B cell (primary cell): ENCODE measurements at regions of chr3 and their contacts with region 1.

Region 1: GRCh38 chr3:4517643-4518311 is 24.6 kb downstream of the ITPR1 start:
- DNase-seq: no peak
- ATAC-seq: peak; percentile 36
- H3K4me3 ChIP-seq: no peak overlapping the region
- H3K4me3 Mint-ChIP-seq: peak overlapping the region; percentile 32
- H3K27ac ChIP-seq: peak overlapping the region in 1 of 2 donors; percentile 70
- H3K27ac Mint-ChIP-seq: peak overlapping the region; percentile 73
- H3K4me1 ChIP-seq: peaks cover 55 to 58% of the 10 kb centered on the region in 2 donors
- H3K4me1 Mint-ChIP-seq: peaks cover 72% of the 10 kb centered on the region
- H3K27me3 ChIP-seq: no peaks in the 10 kb centered on the region
- H3K27me3 Mint-ChIP-seq: no peaks in the 10 kb centered on the region
- CTCF ChIP-seq: no peak

Region 2: GRCh38 chr3:4504340-4505261 is 13.2 kb before region 1 on chr3:
- CTCF ChIA-PET with region 1: interaction called, 14 read pairs
- POLR2A ChIA-PET with region 1: interaction called, 6 read pairs
- intact Hi-C with region 1: loop called (anchors 1 kb)
- DNase-seq: peak; percentile 63
- ATAC-seq: no peak
- H3K4me3 ChIP-seq: peak overlapping the region; percentile 24 to 59 (median 44)
- H3K4me3 Mint-ChIP-seq: peak overlapping the region; percentile 85
- H3K27ac ChIP-seq: peak overlapping the region; percentile 81 to 98
- H3K27ac Mint-ChIP-seq: peak overlapping the region; percentile 93
- H3K4me1 ChIP-seq: peaks cover 80 to 87% of the 10 kb centered on the region in 2 donors
- H3K4me1 Mint-ChIP-seq: peaks cover 88% of the 10 kb centered on the region
- H3K27me3 ChIP-seq: no peaks in the 10 kb centered on the region
- H3K27me3 Mint-ChIP-seq: no peaks in the 10 kb centered on the region
- CTCF ChIP-seq: no peak

Region 3: DNA sequence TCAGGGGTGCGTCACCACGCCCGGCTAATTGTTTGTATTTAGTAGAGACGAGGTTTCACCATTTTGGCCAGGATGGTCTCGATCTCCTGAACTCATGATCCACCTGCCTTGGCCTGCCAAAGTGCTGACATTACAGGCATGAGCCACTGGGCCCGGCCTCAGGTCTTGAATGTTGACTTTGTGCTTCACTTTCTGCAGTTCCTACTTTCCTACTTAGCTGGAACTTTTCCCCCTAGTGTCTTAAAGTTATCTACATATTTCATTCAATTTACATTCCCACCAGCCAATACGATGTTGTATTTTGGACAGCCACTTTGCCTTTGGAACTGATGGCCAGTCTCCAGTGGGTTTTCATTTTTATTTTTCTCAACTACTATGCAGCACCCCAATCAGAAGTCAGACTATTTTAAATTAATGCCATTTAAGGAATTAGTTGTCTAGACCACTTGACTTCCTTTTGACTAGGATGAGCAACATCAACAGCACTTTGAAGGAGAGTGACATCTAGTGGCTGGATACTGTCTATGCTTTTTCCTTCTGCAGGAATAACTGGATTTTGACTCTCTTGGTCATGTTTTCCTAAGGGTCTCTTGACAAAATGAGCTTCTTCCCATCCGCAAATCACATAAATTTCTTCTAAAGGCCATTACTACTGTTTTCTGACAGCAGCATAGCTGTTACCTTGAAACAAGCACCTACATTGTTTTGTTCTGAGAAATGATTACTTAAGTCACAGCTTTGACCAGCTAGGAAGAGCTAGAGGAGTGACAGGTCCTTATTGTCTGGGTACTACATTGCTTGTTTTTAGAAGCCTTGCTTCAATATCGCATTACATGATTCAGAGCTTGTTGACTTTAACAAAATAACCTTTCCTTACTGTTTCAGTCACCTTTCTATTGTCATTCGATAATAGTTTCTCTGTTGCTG is 115.6 kb after region 1 on chr3:
- CTCF ChIA-PET with region 1: interaction called, 28 read pairs
- POLR2A ChIA-PET with region 1: no interaction called
- intact Hi-C with region 1: loop called (anchors 2 kb)
- DNase-seq: peak; percentile 64
- ATAC-seq: peak; percentile 43
- H3K4me3 ChIP-seq: no peak overlapping the region
- H3K4me3 Mint-ChIP-seq: no peak overlapping the region
- H3K27ac ChIP-seq: peak overlapping the region in 1 of 2 donors; percentile 26
- H3K27ac Mint-ChIP-seq: peak overlapping the region; percentile 78
- H3K4me1 ChIP-seq: no peaks in the 10 kb centered on the region
- H3K4me1 Mint-ChIP-seq: peaks cover 13% of the 10 kb centered on the region
- H3K27me3 ChIP-seq: no peaks in the 10 kb centered on the region
- H3K27me3 Mint-ChIP-seq: no peaks in the 10 kb centered on the region
- CTCF ChIP-seq: peak; percentile 91

Region 4: DNA sequence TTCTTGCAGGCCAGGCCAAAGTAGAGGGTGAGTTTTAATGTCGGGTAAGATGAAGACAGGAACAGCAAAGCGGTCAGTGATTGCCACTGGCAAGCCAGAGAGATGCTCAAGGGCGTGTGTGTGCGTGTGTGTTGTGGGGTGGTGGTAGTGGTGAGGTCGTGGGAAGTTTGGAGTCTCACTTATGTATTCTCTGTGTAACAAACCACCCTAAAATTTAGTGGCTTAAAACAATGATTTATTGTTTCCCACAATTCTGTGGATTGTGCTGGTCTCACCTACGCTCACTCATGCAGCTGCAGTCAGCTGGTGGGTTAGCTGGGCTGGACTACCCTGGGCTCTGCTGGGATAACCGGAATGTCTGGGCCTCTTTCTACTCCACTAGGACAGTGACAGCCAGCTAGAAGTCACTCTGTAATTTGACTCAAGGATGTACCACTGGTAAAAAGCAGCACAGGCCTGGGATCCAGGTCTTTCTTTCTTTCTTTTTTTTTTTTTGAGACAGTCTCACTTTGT is 410.6 kb after region 1 on chr3:
- CTCF ChIA-PET with region 1: no interaction called
- POLR2A ChIA-PET with region 1: no interaction called
- intact Hi-C with region 1: no loop called
- DNase-seq: no peak
- ATAC-seq: no peak
- H3K4me3 ChIP-seq: no peak overlapping the region
- H3K4me3 Mint-ChIP-seq: no peak overlapping the region
- H3K27ac ChIP-seq: no peak overlapping the region
- H3K27ac Mint-ChIP-seq: no peak overlapping the region
- H3K4me1 ChIP-seq: peaks cover 0 to 5% of the 10 kb centered on the region in 2 donors
- H3K4me1 Mint-ChIP-seq: peaks cover 9% of the 10 kb centered on the region
- H3K27me3 ChIP-seq: no peaks in the 10 kb centered on the region
- H3K27me3 Mint-ChIP-seq: no peaks in the 10 kb centered on the region
- CTCF ChIP-seq: no peak